ENCODE measurements at regions of chr12 and their contacts with region 1.

Region 1: GRCh38 chr12:7142056-7142644 is 12.0 kb downstream of the CLSTN3 start:
- DNase-seq: peak in 36 of 42 donors; percentile 22 to 78 (median 60)

Region 2: DNA sequence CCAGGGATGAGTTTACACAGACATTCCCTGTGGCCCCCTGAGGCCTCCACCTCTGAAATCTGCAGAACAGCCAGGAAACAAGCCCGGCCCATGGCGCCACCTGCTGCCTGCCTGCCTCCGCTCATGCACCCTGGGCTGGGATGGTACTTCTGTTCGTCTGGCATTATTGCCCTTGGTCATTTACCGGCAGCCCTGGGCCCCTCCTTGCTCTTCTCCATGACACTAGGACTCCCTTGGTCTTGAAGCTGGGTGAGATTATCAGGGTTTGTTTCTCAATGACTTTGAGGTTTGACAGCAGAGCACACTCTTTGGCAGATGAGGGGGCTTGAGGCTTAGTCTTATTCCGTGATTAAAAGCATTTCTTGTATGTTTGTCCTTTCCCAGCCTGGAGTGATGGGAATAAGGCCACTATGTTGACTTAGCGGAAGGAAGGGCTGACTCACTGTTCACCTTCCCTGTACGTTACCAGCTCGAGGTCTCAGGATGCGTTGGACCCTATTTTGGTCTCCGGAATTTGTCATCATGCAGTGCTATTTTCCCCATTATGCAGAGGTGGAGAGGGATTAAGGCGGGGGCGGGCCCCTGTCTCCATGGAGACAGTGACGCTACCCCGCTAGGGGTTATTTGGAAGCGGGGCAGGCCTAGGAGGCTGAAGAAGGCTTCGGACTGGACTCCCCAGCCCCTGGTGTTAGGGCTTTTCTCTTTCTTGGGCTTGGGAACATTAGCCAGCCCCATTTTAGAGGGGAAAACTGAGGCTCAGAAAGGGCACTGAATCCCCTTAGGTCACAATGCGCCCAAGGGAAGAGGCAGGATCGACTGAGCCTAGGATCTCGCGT is 46.6 kb after region 1 on chr12:
- intact Hi-C with region 1: loop called (anchors 5 kb)
- DNase-seq: peak; percentile 66 to 91 (median 80)

Measured in head of caudate nucleus (tissue), 42 donors.